ENCODE measurements at regions of chr4 and their contacts with region 1.

Region 1: DNA sequence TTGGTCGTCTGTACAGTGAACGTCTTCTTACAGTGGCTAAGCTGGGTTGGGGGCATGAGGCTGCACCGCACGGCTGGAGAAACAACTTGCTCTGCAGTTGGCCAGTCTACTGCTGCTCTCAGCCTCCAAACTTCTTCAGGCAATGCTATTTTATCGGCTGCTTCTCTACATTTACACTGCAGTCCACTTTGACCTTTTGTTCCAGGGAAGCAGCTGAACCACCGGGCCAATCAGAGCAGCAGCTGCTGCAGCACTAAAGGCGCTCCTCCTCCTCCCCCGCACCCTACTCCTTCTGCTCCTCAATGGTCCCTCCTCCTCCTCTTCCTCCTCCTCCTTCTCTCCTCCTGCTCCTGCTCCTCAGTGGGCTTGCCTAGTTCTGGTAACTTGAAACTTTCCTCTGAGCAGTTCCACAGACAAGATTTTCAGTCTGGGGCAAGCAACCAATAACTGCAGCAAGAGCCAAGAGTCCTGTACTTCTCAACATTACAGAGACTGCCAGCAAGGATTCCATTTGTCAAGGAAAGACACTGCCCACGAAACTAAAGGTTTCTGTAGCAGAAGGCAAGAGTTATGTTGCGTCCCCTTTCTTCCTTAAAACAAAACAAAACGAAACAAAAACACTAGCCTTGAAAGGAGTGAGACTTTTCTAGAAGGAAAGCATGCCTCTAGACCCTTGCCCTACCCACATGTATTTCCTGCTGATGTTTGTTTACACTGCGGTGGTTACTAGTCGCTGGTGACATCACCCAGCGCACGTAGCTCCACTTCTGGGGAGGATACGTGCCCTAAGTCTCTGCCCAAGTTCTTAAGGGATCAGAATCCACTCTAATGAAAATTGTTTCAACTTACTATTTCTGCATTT is 125.7 kb upstream of the NAP1L5 start:
- DNase-seq: peak; percentile 51 to 86 (median 81)
- H3K4me3 ChIP-seq: peak overlapping the region; percentile 41 to 80 (median 65)
- H3K27ac ChIP-seq: peak overlapping the region in 58 of 59 donors; percentile 48 to 95 (median 88)
- H3K27me3 ChIP-seq: no peaks in the 10 kb centered on the region
- CTCF ChIP-seq: peak in 2 of 56 donors; percentile 12 to 19

Region 2: GRCh38 chr4:88786011-88786410 is 37.3 kb before region 1 on chr4:
- intact Hi-C with region 1: loop called in 1 of 2 experiments (anchors 5 kb)
- DNase-seq: peak in 6 of 10 donors; percentile 21 to 77 (median 53)
- H3K4me3 ChIP-seq: no peak overlapping the region
- H3K27ac ChIP-seq: peak overlapping the region in 30 of 59 donors; percentile 3 to 73 (median 48)
- H3K27me3 ChIP-seq: no peaks in the 10 kb centered on the region
- CTCF ChIP-seq: no peak

Region 3: GRCh38 chr4:88843067-88843685 is 19.9 kb after region 1 on chr4:
- intact Hi-C with region 1: no loop called
- DNase-seq: no peak
- H3K4me3 ChIP-seq: no peak overlapping the region
- H3K27ac ChIP-seq: no peak overlapping the region
- H3K27me3 ChIP-seq: no peaks in the 10 kb centered on the region
- CTCF ChIP-seq: no peak

Region 4: GRCh38 chr4:89024051-89024675 is 200.9 kb after region 1 on chr4:
- intact Hi-C with region 1: loop called in 1 of 2 experiments (anchors 5 kb)
- DNase-seq: peak in 3 of 10 donors; percentile 25 to 63 (median 53)
- H3K4me3 ChIP-seq: peak overlapping the region in 1 of 59 donors; percentile 5
- H3K27ac ChIP-seq: no peak overlapping the region
- H3K27me3 ChIP-seq: no peaks in the 10 kb centered on the region
- CTCF ChIP-seq: peak; percentile 78 to 99 (median 92)

Region 5: GRCh38 chr4:89110986-89111832 is 287.9 kb after region 1 on chr4 and contains the start of gene TIGD2:
- intact Hi-C with region 1: loop called (anchors 5 kb)
- DNase-seq: peak; percentile 62 to 89 (median 81)
- H3K4me3 ChIP-seq: peak within 1 kb of the TSS; percentile 62 to 99 (median 85)
- H3K27ac ChIP-seq: peak within 1 kb of the TSS; percentile 47 to 95 (median 85)
- H3K27me3 ChIP-seq: no peaks in the 10 kb centered on the region
- CTCF ChIP-seq: peak; percentile 54 to 96 (median 82)
- total RNA-seq, gene TIGD2: 2.4 to 7.4 (median 4.9) TPM

Measured in dorsolateral prefrontal cortex (tissue), 120 donors.